ENCODE measurements at regions of chr15 and their contacts with region 1.

Region 1: GRCh38 chr15:43285609-43286037 is 18.9 kb upstream of the TGM5 start:
- DNase-seq: peak; percentile 68
- ATAC-seq: peak; percentile 66
- H3K4me3 Mint-ChIP-seq: no peak overlapping the region
- H3K27ac Mint-ChIP-seq: no peak overlapping the region
- H3K4me1 Mint-ChIP-seq: peaks cover 2% of the 10 kb centered on the region
- H3K27me3 Mint-ChIP-seq: peaks cover 3% of the 10 kb centered on the region

Region 2: GRCh38 chr15:42704492-42704926 is 581.1 kb before region 1 on chr15:
- CTCF ChIA-PET with region 1: interaction called, 3 read pairs
- POLR2A ChIA-PET with region 1: no interaction called
- intact Hi-C with region 1: loop called in 1 of 2 experiments (anchors 1 kb)
- DNase-seq: peak; percentile 78
- ATAC-seq: peak; percentile 98
- H3K4me3 Mint-ChIP-seq: no peak overlapping the region
- H3K27ac Mint-ChIP-seq: no peak overlapping the region
- H3K4me1 Mint-ChIP-seq: peaks cover 5% of the 10 kb centered on the region
- H3K27me3 Mint-ChIP-seq: no peaks in the 10 kb centered on the region

Region 3: DNA sequence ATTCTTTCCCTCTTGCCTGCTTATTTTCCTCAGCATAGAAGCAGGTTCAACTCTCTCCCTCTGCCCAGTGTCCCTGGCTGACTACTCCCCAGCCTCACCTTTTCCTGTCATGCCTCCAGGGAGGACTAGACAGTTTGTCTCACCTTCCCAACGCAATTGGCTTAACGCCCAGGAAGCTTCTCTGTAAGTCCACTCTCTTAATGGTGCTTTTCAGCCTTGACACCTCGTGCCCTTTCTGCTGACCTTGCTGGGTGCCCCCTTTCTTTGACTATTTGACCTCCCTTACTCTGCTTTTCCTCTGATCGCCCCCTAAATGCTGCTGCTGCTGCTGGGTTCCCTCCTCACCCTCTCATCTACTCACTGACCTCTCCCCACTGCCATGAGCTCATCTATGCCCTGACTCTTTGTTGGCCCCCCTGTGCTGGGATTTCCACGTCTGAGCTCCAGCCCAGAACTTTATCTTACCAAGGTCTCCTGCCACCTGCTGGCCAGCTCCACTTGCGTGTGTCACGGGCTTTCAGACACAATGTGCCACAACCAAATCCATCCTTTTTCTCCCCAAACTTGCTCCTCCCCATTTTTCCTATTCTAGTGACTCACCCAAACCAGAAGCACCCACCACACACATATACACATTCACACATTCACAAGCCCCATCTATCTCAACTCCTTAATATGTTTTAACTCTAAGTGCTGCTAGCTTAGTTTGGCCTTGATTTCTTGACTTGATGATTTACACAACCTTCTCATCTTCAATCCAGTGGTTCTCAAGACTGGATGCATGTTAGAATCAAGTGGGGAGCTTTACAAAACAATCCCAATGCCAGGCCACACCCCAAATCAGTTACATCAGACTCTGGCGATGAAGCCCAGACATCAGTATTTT is 81.4 kb before region 1 on chr15:
- CTCF ChIA-PET with region 1: interaction called, 15 read pairs
- POLR2A ChIA-PET with region 1: no interaction called
- intact Hi-C with region 1: no loop called
- DNase-seq: peak; percentile 77
- ATAC-seq: peak; percentile 72
- H3K4me3 Mint-ChIP-seq: no peak overlapping the region
- H3K27ac Mint-ChIP-seq: no peak overlapping the region
- H3K4me1 Mint-ChIP-seq: peaks cover 7% of the 10 kb centered on the region
- H3K27me3 Mint-ChIP-seq: peaks cover 2% of the 10 kb centered on the region

Region 4: DNA sequence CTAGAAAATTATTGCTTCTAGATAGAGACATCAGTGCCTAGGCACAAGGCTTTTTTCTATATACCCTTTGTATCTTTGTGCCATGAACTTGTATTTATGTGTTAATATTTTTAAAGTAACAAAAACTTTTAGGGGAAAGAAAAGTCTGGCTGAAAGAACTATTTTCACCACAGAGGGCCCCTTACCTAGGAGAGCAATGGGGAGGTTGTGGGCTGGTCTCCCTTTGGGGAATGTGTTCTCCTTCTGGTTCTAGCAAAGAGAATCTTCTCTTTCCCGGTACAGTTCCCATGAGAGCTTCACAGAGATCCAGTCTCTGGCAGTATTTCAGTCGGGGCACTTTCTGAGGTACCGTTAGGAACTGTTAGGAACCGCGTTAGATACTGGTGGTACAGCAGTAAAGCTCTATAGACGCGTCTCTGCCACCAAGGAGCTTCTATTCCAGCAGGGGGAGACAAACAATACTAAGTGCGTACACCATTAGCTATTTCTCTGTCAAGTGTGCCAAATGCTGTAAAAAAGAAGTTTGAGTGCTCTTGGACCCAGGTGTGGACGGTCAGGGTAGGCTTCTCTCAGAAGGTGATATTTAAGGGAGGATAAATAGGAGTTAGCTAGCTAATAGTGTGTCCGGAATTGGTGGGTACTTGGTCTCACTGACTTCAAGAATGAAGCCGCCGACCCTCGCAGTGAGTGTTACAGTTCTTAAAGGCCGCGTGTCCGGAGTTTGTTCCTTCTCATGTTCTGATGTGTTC is 60.2 kb before region 1 on chr15:
- CTCF ChIA-PET with region 1: interaction called, 118 read pairs
- POLR2A ChIA-PET with region 1: interaction called, 3 read pairs
- intact Hi-C with region 1: loop called (anchors 1 kb)
- DNase-seq: peak; percentile 57
- ATAC-seq: peak; percentile 90
- H3K4me3 Mint-ChIP-seq: no peak overlapping the region
- H3K27ac Mint-ChIP-seq: no peak overlapping the region
- H3K4me1 Mint-ChIP-seq: peaks cover 8% of the 10 kb centered on the region
- H3K27me3 Mint-ChIP-seq: peaks cover 6% of the 10 kb centered on the region

Region 5: DNA sequence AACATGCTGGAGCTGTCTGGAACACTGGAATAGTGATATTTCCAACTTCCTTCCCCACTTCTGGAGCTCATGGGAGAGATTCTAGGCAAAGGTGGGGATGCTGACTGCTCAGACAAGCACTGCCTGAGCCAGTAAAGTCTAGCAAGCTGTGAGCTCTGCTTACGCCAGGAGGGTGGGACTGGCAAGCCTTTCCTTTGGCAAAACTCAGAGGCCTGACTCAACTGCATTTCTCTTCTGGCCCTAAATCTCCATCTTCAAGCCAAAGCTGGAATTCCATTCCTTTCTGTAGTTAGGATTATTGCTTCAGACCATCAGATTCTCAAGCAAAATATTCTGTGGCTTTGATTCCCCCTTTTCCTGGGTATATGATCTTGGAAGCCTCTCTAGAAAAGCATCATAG is 44.5 kb before region 1 on chr15:
- CTCF ChIA-PET with region 1: interaction called, 14 read pairs
- POLR2A ChIA-PET with region 1: no interaction called
- intact Hi-C with region 1: no loop called
- DNase-seq: no peak
- ATAC-seq: no peak
- H3K4me3 Mint-ChIP-seq: no peak overlapping the region
- H3K27ac Mint-ChIP-seq: no peak overlapping the region
- H3K4me1 Mint-ChIP-seq: no peaks in the 10 kb centered on the region
- H3K27me3 Mint-ChIP-seq: peaks cover 2% of the 10 kb centered on the region

Region 6: GRCh38 chr15:43302205-43302817 is 16.7 kb after region 1 on chr15:
- CTCF ChIA-PET with region 1: interaction called, 12 read pairs
- POLR2A ChIA-PET with region 1: no interaction called
- intact Hi-C with region 1: no loop called
- DNase-seq: no peak
- ATAC-seq: no peak
- H3K4me3 Mint-ChIP-seq: no peak within 1 kb of the TSS
- H3K27ac Mint-ChIP-seq: no peak within 1 kb of the TSS
- H3K4me1 Mint-ChIP-seq: no peaks in the 10 kb centered on the region
- H3K27me3 Mint-ChIP-seq: peaks cover 9% of the 10 kb centered on the region

Measured in activated CD4-positive, alpha-beta T cell treated with anti-CD3 and anti-CD28 coated beads for 36 hours (primary cell).